Vagina (tissue), 2 donors: ENCODE measurements at regions of chr3 and their contacts with region 1.

Region 1: DNA sequence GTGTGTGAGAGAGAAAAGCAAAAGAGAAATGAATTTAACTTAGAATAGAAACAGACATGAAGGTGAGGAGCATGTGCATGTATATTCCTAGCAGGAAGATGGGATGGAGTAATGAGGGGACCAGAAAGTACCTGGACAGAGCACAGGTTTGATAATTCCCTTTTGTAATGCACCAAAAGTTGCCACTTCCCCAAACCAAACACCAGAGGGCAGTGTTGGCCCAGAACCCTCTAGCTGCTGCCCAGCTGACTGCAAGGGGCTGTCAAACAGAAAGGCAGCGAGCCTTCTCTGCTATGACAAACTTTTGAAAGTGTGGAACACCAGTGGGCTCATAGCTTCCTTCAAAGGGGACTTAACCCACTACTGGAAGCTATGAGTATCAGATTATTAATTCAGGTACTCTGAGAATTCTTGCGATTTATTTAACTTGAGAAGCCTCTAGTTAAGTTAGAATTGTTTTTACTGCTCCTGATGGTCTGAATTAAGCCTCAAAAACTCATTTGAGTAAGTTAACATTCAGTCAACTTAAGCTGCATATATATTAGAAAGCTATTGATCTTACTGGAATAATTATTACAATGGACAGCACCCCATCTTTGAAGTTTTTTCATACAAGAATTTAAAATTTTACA is 234.9 kb downstream of the NEK10 start:
- DNase-seq: no peak
- H3K4me3 ChIP-seq: no peak overlapping the region
- H3K27ac ChIP-seq: no peak overlapping the region
- H3K4me1 ChIP-seq: no peaks in the 10 kb centered on the region
- H3K27me3 ChIP-seq: no peaks in the 10 kb centered on the region
- CTCF ChIP-seq: peak; percentile 54 to 77 (median 72)
- POLR2A ChIP-seq: no peak

Region 2: GRCh38 chr3:25962249-25962648 is 1172.0 kb before region 1 on chr3:
- intact Hi-C with region 1: no loop called
- DNase-seq: no peak
- H3K4me3 ChIP-seq: no peak overlapping the region
- H3K27ac ChIP-seq: no peak overlapping the region
- H3K4me1 ChIP-seq: no peaks in the 10 kb centered on the region
- H3K27me3 ChIP-seq: no peaks in the 10 kb centered on the region
- CTCF ChIP-seq: no peak
- POLR2A ChIP-seq: no peak

Region 3: DNA sequence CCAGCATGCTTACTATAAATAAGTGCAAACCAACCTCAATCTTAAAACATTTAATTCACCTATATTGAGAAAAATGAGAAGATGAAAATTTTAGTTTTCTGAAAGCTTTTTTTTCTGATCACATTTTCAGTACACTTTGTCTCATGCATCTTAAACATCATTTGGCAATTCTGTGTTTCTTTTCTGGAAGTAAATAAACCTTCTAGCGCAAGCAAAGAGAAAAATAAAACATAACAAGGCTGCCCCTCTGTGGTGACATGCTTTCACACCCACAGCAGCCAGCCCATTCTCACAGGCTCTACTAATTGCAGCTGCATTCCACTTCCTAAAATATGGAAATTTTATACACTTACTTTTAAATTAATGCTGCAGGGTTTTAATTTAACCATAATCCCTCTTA is 144.8 kb after region 1 on chr3:
- intact Hi-C with region 1: loop called (anchors 10 kb)
- DNase-seq: no peak
- H3K4me3 ChIP-seq: no peak overlapping the region
- H3K27ac ChIP-seq: no peak overlapping the region
- H3K4me1 ChIP-seq: no peaks in the 10 kb centered on the region
- H3K27me3 ChIP-seq: no peaks in the 10 kb centered on the region
- CTCF ChIP-seq: no peak
- POLR2A ChIP-seq: no peak

Region 4: DNA sequence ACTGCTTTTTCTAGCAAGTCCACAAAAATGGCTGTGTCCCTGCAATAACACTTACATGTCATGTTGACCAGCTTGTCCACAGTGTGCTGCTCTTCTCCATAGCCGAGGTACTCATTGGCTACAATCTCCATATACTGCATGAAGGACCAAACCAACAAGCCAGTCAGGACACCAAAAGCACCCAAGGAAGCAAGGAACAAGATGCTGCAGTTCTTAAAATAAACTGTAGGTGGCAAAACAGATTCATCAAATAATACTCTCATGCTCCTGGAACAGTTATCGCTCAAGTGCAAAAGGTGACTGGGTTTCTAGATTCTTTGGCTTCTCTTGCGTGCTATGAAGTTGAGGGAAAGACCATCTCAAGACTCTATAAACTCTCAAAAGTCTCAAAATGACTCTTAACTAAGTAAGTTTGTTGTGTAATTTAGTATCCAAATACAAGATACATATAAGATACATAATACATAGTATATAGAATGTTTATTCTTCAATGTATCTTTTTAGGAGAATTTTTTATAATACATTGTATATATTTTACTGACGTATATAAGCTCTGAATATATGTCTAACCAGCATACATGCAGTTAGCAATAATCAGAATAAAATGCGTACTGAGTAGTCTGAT is 177.9 kb after region 1 on chr3:
- intact Hi-C with region 1: no loop called
- DNase-seq: no peak
- H3K4me3 ChIP-seq: no peak overlapping the region
- H3K27ac ChIP-seq: no peak overlapping the region
- H3K4me1 ChIP-seq: no peaks in the 10 kb centered on the region
- H3K27me3 ChIP-seq: no peaks in the 10 kb centered on the region
- CTCF ChIP-seq: peak; percentile 63 to 81 (median 80)
- POLR2A ChIP-seq: no peak